CD8-positive, alpha-beta T cell (primary cell): ENCODE measurements at regions of chr12 and their contacts with region 1.

Region 1: DNA sequence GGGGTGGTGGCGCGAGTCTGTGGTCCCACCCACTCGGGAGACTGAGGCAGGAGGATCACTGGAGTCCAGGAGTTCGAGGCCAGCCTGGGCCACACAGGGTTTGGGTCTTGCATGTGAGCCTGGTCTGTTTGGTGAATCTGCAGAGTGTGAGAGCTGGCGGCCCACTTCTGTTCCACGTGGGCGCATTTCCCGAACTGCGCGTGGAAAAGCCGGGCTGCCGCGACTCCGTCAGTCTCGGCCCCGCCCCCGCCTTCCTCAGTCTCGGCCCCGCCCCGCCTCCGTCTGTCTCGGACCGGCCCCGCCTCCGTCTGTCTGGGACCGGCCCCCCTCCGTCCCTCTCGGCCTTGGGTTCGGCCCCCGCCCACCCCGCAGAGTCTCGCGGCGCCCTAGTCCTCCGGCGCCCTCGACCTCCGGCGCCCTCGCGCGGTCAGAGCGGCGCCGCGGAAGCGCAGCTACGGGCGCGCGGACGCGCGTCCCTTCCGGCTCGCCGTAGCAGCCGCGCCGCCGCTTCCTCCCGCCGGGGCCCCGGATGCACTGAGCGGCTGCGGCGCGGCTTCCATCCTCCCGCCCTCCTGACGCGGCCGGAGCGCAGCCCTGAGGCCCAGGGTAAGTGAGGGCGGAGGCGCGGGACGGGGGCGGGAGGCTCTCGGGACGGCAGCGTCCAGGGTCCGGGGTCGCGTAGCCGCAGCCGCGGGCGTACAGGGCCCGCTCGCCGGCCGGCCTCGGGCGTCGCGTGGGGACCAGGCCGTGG is at the start of gene EP400:
- DNase-seq: peak; percentile 87 to 98 (median 95)
- ATAC-seq: peak; percentile 91
- H3K4me3 ChIP-seq: peak within 1 kb of the TSS; percentile 81 to 84
- H3K4me3 Mint-ChIP-seq: peak within 1 kb of the TSS; percentile 91
- H3K27ac ChIP-seq: peak within 1 kb of the TSS; percentile 59 to 73
- H3K27ac Mint-ChIP-seq: peak within 1 kb of the TSS; percentile 90
- H3K4me1 ChIP-seq: peaks cover 34% of the 10 kb centered on the region
- H3K4me1 Mint-ChIP-seq: peaks cover 42% of the 10 kb centered on the region
- H3K27me3 ChIP-seq: no peaks in the 10 kb centered on the region
- H3K27me3 Mint-ChIP-seq: no peaks in the 10 kb centered on the region
- CTCF ChIP-seq: no peak
- total RNA-seq, gene EP400: 53.1 to 53.9 TPM

Region 2: GRCh38 chr12:131710464-131711457 is 238.8 kb before region 1 on chr12 and contains the start of gene SFSWAP:
- CTCF ChIA-PET with region 1: no interaction called
- POLR2A ChIA-PET with region 1: no interaction called
- intact Hi-C with region 1: loop called (anchors 2 to 5 kb)
- DNase-seq: peak; percentile 54 to 86 (median 77)
- ATAC-seq: peak; percentile 84
- H3K4me3 ChIP-seq: peak within 1 kb of the TSS; percentile 76 to 99
- H3K4me3 Mint-ChIP-seq: peak within 1 kb of the TSS; percentile 99
- H3K27ac ChIP-seq: peak within 1 kb of the TSS; percentile 86 to 98
- H3K27ac Mint-ChIP-seq: peak within 1 kb of the TSS; percentile 98
- H3K4me1 ChIP-seq: peaks cover 20% of the 10 kb centered on the region
- H3K4me1 Mint-ChIP-seq: peaks cover 31% of the 10 kb centered on the region
- H3K27me3 ChIP-seq: no peaks in the 10 kb centered on the region
- H3K27me3 Mint-ChIP-seq: no peaks in the 10 kb centered on the region
- CTCF ChIP-seq: no peak
- total RNA-seq, gene SFSWAP: 83.8 to 94.0 TPM

Region 3: DNA sequence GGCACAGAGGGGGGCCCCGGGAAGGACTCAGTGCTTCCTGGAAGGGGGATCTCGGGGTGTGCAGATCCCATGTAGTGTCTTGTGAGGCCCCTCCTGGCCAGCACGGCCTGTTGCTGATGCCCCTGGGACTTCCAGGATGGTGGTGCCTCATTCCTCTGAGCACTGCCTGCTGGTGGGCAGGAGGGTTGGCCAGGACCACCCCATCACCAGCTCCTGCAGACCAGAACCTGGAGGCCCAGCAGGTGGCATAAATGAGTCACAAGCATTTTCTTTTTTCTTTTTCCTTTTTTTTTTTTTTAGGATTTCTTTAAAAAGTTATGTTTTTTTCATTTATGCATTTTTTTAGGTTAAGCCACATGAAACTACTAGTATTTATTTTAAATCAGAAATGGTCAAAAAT is 113.4 kb before region 1 on chr12:
- CTCF ChIA-PET with region 1: interaction called, 3 read pairs
- POLR2A ChIA-PET with region 1: interaction called, 3 read pairs
- intact Hi-C with region 1: loop called (anchors 1 kb)
- DNase-seq: peak in 1 of 9 experiments; percentile 24
- ATAC-seq: no peak
- H3K4me3 ChIP-seq: no peak overlapping the region
- H3K4me3 Mint-ChIP-seq: no peak overlapping the region
- H3K27ac ChIP-seq: no peak overlapping the region
- H3K27ac Mint-ChIP-seq: no peak overlapping the region
- H3K4me1 ChIP-seq: peaks cover under 1% of the 10 kb centered on the region
- H3K4me1 Mint-ChIP-seq: no peaks in the 10 kb centered on the region
- H3K27me3 ChIP-seq: no peaks in the 10 kb centered on the region
- H3K27me3 Mint-ChIP-seq: peaks cover 10% of the 10 kb centered on the region
- CTCF ChIP-seq: no peak

Region 4: GRCh38 chr12:131928711-131929580 is 20.7 kb before region 1 on chr12 and contains the start of gene PUS1:
- CTCF ChIA-PET with region 1: no interaction called
- POLR2A ChIA-PET with region 1: interaction called, 6 read pairs
- intact Hi-C with region 1: loop called (anchors 1 kb)
- DNase-seq: peak; percentile 87 to 97 (median 93)
- ATAC-seq: peak; percentile 88
- H3K4me3 ChIP-seq: peak within 1 kb of the TSS; percentile 90 to 96
- H3K4me3 Mint-ChIP-seq: peak within 1 kb of the TSS; percentile 91
- H3K27ac ChIP-seq: peak within 1 kb of the TSS; percentile 63 to 73
- H3K27ac Mint-ChIP-seq: peak within 1 kb of the TSS; percentile 87
- H3K4me1 ChIP-seq: peaks cover 11% of the 10 kb centered on the region
- H3K4me1 Mint-ChIP-seq: peaks cover 18% of the 10 kb centered on the region
- H3K27me3 ChIP-seq: no peaks in the 10 kb centered on the region
- H3K27me3 Mint-ChIP-seq: no peaks in the 10 kb centered on the region
- CTCF ChIP-seq: no peak
- total RNA-seq, gene PUS1: 17.5 to 17.9 TPM

Region 5: GRCh38 chr12:132144115-132144812 is 194.7 kb after region 1 on chr12 and contains the starts of genes DDX51 and NOC4L:
- CTCF ChIA-PET with region 1: no interaction called
- POLR2A ChIA-PET with region 1: no interaction called
- intact Hi-C with region 1: loop called in 1 of 2 experiments (anchors 10 kb)
- DNase-seq: peak; percentile 92 to 98 (median 96)
- ATAC-seq: peak; percentile 89
- H3K4me3 ChIP-seq: peak within 1 kb of the TSS; percentile 80 to 98
- H3K4me3 Mint-ChIP-seq: peak within 1 kb of the TSS; percentile 95
- H3K27ac ChIP-seq: peak within 1 kb of the TSS; percentile 84 to 90
- H3K27ac Mint-ChIP-seq: peak within 1 kb of the TSS; percentile 98
- H3K4me1 ChIP-seq: peaks cover 24% of the 10 kb centered on the region
- H3K4me1 Mint-ChIP-seq: peaks cover 27% of the 10 kb centered on the region
- H3K27me3 ChIP-seq: no peaks in the 10 kb centered on the region
- H3K27me3 Mint-ChIP-seq: no peaks in the 10 kb centered on the region
- CTCF ChIP-seq: no peak
- total RNA-seq, gene DDX51: 61.5 to 66.5 TPM
- total RNA-seq, gene NOC4L: 25.8 to 28.3 TPM